ENCODE measurements at regions of chr2 and their contacts with region 1.

Region 1: DNA sequence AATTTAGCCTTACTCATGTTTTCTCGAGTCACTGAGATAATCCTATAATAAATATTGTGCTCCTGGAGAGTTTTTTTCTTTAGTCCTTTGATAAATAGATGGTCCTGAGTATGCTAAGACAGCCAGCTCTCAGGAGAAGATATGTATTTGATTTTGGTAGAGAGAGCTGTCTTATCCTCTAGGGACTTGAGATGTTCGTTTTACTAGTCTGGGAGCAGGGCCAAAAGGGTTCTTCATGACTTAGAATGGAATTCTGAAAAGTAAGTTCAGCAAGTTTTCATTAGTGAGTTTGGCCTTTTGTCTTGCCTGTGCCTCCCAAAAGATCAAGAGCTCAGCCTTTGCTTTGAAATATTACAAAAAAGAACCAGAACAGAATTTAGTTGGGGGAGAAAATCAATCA is 246.7 kb downstream of the BABAM2 start:
- DNase-seq: no peak
- ATAC-seq: peak; percentile 49

Region 2: GRCh38 chr2:28175028-28175427 is 37.8 kb after region 1 on chr2:
- intact Hi-C with region 1: loop called (anchors 2 kb)
- DNase-seq: no peak
- ATAC-seq: peak; percentile 28

Measured in Right ventricle myocardium inferior (tissue), 1 donor.